ENCODE measurements at regions of chr14 and their contacts with region 1.

Region 1: GRCh38 chr14:52351233-52352060 is 37.3 kb downstream of the PTGER2 start:
- DNase-seq: no peak
- ATAC-seq: peak; percentile 55
- H3K4me3 Mint-ChIP-seq: peak overlapping the region; percentile 13
- H3K27ac Mint-ChIP-seq: peak overlapping the region; percentile 68
- H3K4me1 Mint-ChIP-seq: peaks cover 52% of the 10 kb centered on the region
- H3K27me3 Mint-ChIP-seq: peaks cover 5% of the 10 kb centered on the region

Region 2: GRCh38 chr14:52313903-52314594 is 37.4 kb before region 1 on chr14 and contains the start of gene PTGER2:
- CTCF ChIA-PET with region 1: interaction called, 4 read pairs
- POLR2A ChIA-PET with region 1: interaction called, 4 read pairs
- intact Hi-C with region 1: loop called in 1 of 2 experiments (anchors 5 kb)
- DNase-seq: peak; percentile 83
- ATAC-seq: peak; percentile 62
- H3K4me3 Mint-ChIP-seq: peak within 1 kb of the TSS; percentile 87
- H3K27ac Mint-ChIP-seq: peak within 1 kb of the TSS; percentile 80
- H3K4me1 Mint-ChIP-seq: peaks cover 50% of the 10 kb centered on the region
- H3K27me3 Mint-ChIP-seq: peaks cover 53% of the 10 kb centered on the region
- total RNA-seq, gene PTGER2: 2.4 TPM

Region 3: GRCh38 chr14:52325126-52325525 is 26.3 kb before region 1 on chr14:
- CTCF ChIA-PET with region 1: interaction called, 3 read pairs
- POLR2A ChIA-PET with region 1: interaction called, 3 read pairs
- intact Hi-C with region 1: loop called (anchors 1 to 2 kb)
- DNase-seq: peak; percentile 45
- ATAC-seq: peak; percentile 87
- H3K4me3 Mint-ChIP-seq: no peak overlapping the region
- H3K27ac Mint-ChIP-seq: no peak overlapping the region
- H3K4me1 Mint-ChIP-seq: peaks cover 43% of the 10 kb centered on the region
- H3K27me3 Mint-ChIP-seq: peaks cover 8% of the 10 kb centered on the region

Region 4: GRCh38 chr14:52422650-52423356 is 71.4 kb after region 1 on chr14:
- CTCF ChIA-PET with region 1: no interaction called
- POLR2A ChIA-PET with region 1: no interaction called
- intact Hi-C with region 1: no loop called
- DNase-seq: no peak
- ATAC-seq: no peak
- H3K4me3 Mint-ChIP-seq: no peak overlapping the region
- H3K27ac Mint-ChIP-seq: no peak overlapping the region
- H3K4me1 Mint-ChIP-seq: peaks cover 10% of the 10 kb centered on the region
- H3K27me3 Mint-ChIP-seq: no peaks in the 10 kb centered on the region

Region 5: DNA sequence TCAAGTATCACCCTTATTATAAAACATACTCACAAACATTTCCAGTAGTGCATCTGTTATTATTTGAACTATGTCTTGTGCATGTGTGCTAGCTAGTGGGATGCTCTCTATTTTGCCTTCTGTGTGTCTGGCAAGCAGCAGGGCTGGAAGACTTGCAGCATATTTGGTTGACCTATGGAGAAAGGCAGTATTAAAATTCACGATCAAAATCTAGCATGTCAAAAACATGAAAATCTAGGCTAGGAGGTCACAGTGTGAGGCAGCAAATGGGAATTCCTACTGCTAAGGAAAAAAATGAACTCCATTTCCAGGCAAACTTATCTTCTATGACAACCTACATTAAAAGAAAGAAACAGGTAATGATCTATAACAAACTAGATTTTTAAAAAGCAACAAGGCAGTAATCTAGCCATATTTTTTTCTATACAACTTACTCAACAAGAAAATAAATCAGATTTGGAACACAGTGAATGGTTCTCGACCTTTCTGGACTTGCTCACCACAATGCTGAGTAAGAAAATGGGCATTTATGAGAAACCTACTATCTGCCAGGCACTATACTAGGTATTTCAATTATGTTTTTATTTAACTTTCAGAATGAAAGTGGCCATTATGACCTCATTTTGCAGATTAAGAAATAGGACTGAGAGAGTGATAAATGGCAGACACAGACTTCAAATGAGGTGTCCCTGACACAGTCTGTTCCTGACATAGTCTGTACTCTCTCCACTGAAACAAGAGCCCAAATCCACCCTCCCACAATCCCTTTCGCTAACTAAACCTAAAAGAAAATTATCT is 104.0 kb after region 1 on chr14:
- CTCF ChIA-PET with region 1: no interaction called
- POLR2A ChIA-PET with region 1: no interaction called
- intact Hi-C with region 1: loop called in 1 of 2 experiments (anchors 5 kb)
- DNase-seq: no peak
- ATAC-seq: peak; percentile 57
- H3K4me3 Mint-ChIP-seq: no peak overlapping the region
- H3K27ac Mint-ChIP-seq: no peak overlapping the region
- H3K4me1 Mint-ChIP-seq: peaks cover 8% of the 10 kb centered on the region
- H3K27me3 Mint-ChIP-seq: no peaks in the 10 kb centered on the region

Region 6: DNA sequence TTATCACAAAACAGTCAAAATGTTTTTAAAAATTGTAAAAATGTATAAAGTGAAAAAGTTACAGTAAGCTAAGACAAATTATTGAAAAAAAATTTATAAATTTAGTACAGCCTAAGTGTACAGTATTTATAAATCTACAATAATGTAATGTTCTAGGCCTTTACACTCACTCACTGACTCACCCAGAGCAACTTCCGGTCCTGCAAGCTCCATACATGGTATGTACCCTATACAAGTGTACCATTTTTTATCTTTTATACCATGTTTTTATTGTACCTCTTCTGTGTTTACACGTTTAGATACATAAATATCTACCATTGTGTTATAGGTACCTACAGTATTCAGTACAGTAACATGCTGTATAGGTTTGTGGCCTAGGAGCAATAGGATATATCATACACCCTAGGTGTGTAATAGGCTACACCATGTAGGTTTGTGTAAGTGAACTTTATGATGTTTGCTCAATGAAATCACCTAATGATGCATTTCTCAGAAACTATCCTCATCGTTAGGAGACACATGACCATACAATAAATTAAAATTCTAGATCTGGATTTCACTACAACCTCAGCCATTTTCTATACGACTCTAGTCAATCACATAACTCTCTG is 134.0 kb after region 1 on chr14:
- CTCF ChIA-PET with region 1: no interaction called
- POLR2A ChIA-PET with region 1: no interaction called
- intact Hi-C with region 1: no loop called
- DNase-seq: no peak
- ATAC-seq: no peak
- H3K4me3 Mint-ChIP-seq: no peak overlapping the region
- H3K27ac Mint-ChIP-seq: no peak overlapping the region
- H3K4me1 Mint-ChIP-seq: no peaks in the 10 kb centered on the region
- H3K27me3 Mint-ChIP-seq: no peaks in the 10 kb centered on the region